Sciatic nerve (tissue), 2 donors: ENCODE measurements at regions of chr15 and their contacts with region 1.

Region 1: GRCh38 chr15:96330450-96331145 is at the start of gene NR2F2:
- DNase-seq: peak; percentile 98
- ATAC-seq: peak; percentile 89
- total RNA-seq, gene NR2F2: 242 TPM

Region 2: GRCh38 chr15:96893159-96893906 is 562.7 kb after region 1 on chr15:
- intact Hi-C with region 1: loop called (anchors 5 kb)
- DNase-seq: no peak
- ATAC-seq: peak; percentile 87

Region 3: GRCh38 chr15:97234851-97235610 is 904.4 kb after region 1 on chr15:
- intact Hi-C with region 1: loop called (anchors 10 kb)
- DNase-seq: peak; percentile 82
- ATAC-seq: peak; percentile 92